Activated CD8-positive, alpha-beta memory T cell treated with anti-CD3 and anti-CD28 coated beads, Interleukin-2, amount 10 ng/mL, durations not matched to agents 7 days and 5 days (primary cell): ENCODE measurements at regions of chr9 and their contacts with region 1.

Region 1: GRCh38 chr9:131733541-131734061 is 6.3 kb downstream of the RAPGEF1 start:
- DNase-seq: peak; percentile 76
- ATAC-seq: peak; percentile 28
- H3K4me3 Mint-ChIP-seq: peak overlapping the region; percentile 88
- H3K27ac Mint-ChIP-seq: peak overlapping the region; percentile 96
- H3K4me1 Mint-ChIP-seq: peaks cover 82% of the 10 kb centered on the region
- H3K27me3 Mint-ChIP-seq: no peaks in the 10 kb centered on the region

Region 2: GRCh38 chr9:131635285-131635684 is 98.3 kb before region 1 on chr9:
- CTCF ChIA-PET with region 1: interaction called, 16 read pairs
- DNase-seq: peak; percentile 90
- ATAC-seq: peak; percentile 98
- H3K4me3 Mint-ChIP-seq: no peak overlapping the region
- H3K27ac Mint-ChIP-seq: peak overlapping the region; percentile 88
- H3K4me1 Mint-ChIP-seq: peaks cover 52% of the 10 kb centered on the region
- H3K27me3 Mint-ChIP-seq: no peaks in the 10 kb centered on the region

Region 3: GRCh38 chr9:131668439-131669268 is 64.9 kb before region 1 on chr9:
- CTCF ChIA-PET with region 1: interaction called, 126 read pairs
- DNase-seq: peak; percentile 82
- ATAC-seq: peak; percentile 68
- H3K4me3 Mint-ChIP-seq: peak overlapping the region; percentile 60
- H3K27ac Mint-ChIP-seq: peak overlapping the region; percentile 99
- H3K4me1 Mint-ChIP-seq: peaks cover 93% of the 10 kb centered on the region
- H3K27me3 Mint-ChIP-seq: no peaks in the 10 kb centered on the region

Region 4: GRCh38 chr9:131709771-131710454 is 23.7 kb before region 1 on chr9:
- CTCF ChIA-PET with region 1: interaction called, 35 read pairs
- DNase-seq: peak; percentile 67
- ATAC-seq: peak; percentile 82
- H3K4me3 Mint-ChIP-seq: peak overlapping the region; percentile 54
- H3K27ac Mint-ChIP-seq: peak overlapping the region; percentile 90
- H3K4me1 Mint-ChIP-seq: peaks cover 82% of the 10 kb centered on the region
- H3K27me3 Mint-ChIP-seq: no peaks in the 10 kb centered on the region

Region 5: GRCh38 chr9:131799177-131799823 is 65.7 kb after region 1 on chr9:
- CTCF ChIA-PET with region 1: no interaction called
- DNase-seq: peak; percentile 68
- ATAC-seq: peak; percentile 51
- H3K4me3 Mint-ChIP-seq: no peak overlapping the region
- H3K27ac Mint-ChIP-seq: no peak overlapping the region
- H3K4me1 Mint-ChIP-seq: no peaks in the 10 kb centered on the region
- H3K27me3 Mint-ChIP-seq: peaks cover 16% of the 10 kb centered on the region